ENCODE measurements at regions of chr2 and their contacts with region 1.

Region 1: DNA sequence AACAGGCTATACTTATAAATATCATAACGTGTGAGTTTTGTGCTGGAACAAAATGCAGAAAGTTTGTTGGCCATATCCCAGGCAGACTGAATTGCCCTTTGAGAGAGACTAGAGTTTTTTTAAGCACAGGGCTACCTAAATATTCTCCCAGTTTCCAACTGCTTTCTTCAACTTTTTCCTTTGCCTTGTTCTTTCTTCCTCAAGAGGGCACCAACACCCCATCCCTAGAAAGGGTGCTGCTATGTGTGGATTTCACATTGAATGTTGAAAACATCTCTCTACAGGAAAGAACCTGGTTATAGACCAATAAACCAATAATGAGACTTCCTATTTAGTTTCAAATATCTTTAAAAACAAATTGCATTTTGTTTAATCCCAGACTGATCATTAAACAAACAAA is 87.9 kb downstream of the ICOS start:
- DNase-seq: peak; percentile 50
- ATAC-seq: no peak
- H3K4me3 Mint-ChIP-seq: no peak overlapping the region
- H3K27ac Mint-ChIP-seq: no peak overlapping the region
- H3K4me1 Mint-ChIP-seq: peaks cover 52% of the 10 kb centered on the region
- H3K27me3 Mint-ChIP-seq: no peaks in the 10 kb centered on the region

Region 2: DNA sequence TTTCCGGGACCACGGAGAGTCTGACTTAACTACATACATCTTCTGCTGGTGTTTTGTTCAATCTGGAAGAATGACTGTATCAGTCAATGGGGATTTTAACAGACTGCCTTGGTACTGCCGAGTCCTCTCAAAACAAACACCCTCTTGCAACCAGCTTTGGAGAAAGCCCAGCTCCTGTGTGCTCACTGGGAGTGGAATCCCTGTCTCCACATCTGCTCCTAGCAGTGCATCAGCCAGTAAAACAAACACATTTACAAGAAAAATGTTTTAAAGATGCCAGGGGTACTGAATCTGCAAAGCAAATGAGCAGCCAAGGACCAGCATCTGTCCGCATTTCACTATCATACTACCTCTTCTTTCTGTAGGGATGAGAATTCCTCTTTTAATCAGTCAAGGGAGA is 64.8 kb before region 1 on chr2:
- CTCF ChIA-PET with region 1: interaction called, 14 read pairs
- POLR2A ChIA-PET with region 1: interaction called, 3 read pairs
- intact Hi-C with region 1: no loop called
- DNase-seq: no peak
- ATAC-seq: no peak
- H3K4me3 Mint-ChIP-seq: no peak overlapping the region
- H3K27ac Mint-ChIP-seq: no peak overlapping the region
- H3K4me1 Mint-ChIP-seq: peaks cover 47% of the 10 kb centered on the region
- H3K27me3 Mint-ChIP-seq: no peaks in the 10 kb centered on the region

Region 3: DNA sequence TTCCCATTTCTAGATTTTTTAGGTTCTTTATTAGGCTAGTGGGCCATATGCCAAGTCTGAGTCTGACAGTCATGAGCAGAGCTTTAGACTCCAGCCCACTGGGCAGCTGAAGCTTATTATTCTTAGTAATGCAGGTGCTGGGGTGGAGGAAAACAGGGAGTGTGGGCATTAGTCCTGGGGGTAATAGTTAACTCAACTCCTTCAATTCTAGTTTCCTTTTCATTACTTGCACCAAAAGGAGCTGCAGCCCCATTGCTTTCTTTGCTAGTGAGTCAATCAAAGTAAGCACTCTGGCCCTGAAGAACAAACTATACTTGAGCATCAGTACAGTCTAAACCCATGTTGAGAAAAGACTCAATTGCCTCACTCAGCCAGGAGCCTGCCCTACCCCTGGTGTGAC is 52.4 kb before region 1 on chr2:
- CTCF ChIA-PET with region 1: interaction called, 5 read pairs
- POLR2A ChIA-PET with region 1: no interaction called
- intact Hi-C with region 1: loop called (anchors 1 to 2 kb)
- DNase-seq: no peak
- ATAC-seq: no peak
- H3K4me3 Mint-ChIP-seq: no peak overlapping the region
- H3K27ac Mint-ChIP-seq: no peak overlapping the region
- H3K4me1 Mint-ChIP-seq: peaks cover 27% of the 10 kb centered on the region
- H3K27me3 Mint-ChIP-seq: no peaks in the 10 kb centered on the region

Region 4: GRCh38 chr2:203989521-203989920 is 35.0 kb before region 1 on chr2:
- CTCF ChIA-PET with region 1: interaction called, 3 read pairs
- POLR2A ChIA-PET with region 1: interaction called, 4 read pairs
- intact Hi-C with region 1: loop called in 1 of 2 experiments (anchors 2 kb)
- DNase-seq: no peak
- ATAC-seq: no peak
- H3K4me3 Mint-ChIP-seq: no peak overlapping the region
- H3K27ac Mint-ChIP-seq: peak overlapping the region; percentile 87
- H3K4me1 Mint-ChIP-seq: peaks cover 8% of the 10 kb centered on the region
- H3K27me3 Mint-ChIP-seq: no peaks in the 10 kb centered on the region

Region 5: GRCh38 chr2:203997980-203998809 is 26.3 kb before region 1 on chr2:
- CTCF ChIA-PET with region 1: interaction called, 4 read pairs
- POLR2A ChIA-PET with region 1: no interaction called
- intact Hi-C with region 1: loop called in 1 of 2 experiments (anchors 1 kb)
- DNase-seq: no peak
- ATAC-seq: peak; percentile 73
- H3K4me3 Mint-ChIP-seq: peak overlapping the region; percentile 32
- H3K27ac Mint-ChIP-seq: peak overlapping the region; percentile 86
- H3K4me1 Mint-ChIP-seq: peaks cover 67% of the 10 kb centered on the region
- H3K27me3 Mint-ChIP-seq: no peaks in the 10 kb centered on the region

Region 6: GRCh38 chr2:204010628-204011560 is 13.6 kb before region 1 on chr2:
- CTCF ChIA-PET with region 1: interaction called, 5 read pairs
- POLR2A ChIA-PET with region 1: interaction called, 4 read pairs
- intact Hi-C with region 1: loop called in 1 of 2 experiments (anchors 1 kb)
- DNase-seq: peak; percentile 31
- ATAC-seq: peak; percentile 42
- H3K4me3 Mint-ChIP-seq: peak overlapping the region; percentile 34
- H3K27ac Mint-ChIP-seq: peak overlapping the region; percentile 72
- H3K4me1 Mint-ChIP-seq: peaks cover 84% of the 10 kb centered on the region
- H3K27me3 Mint-ChIP-seq: no peaks in the 10 kb centered on the region

Region 7: DNA sequence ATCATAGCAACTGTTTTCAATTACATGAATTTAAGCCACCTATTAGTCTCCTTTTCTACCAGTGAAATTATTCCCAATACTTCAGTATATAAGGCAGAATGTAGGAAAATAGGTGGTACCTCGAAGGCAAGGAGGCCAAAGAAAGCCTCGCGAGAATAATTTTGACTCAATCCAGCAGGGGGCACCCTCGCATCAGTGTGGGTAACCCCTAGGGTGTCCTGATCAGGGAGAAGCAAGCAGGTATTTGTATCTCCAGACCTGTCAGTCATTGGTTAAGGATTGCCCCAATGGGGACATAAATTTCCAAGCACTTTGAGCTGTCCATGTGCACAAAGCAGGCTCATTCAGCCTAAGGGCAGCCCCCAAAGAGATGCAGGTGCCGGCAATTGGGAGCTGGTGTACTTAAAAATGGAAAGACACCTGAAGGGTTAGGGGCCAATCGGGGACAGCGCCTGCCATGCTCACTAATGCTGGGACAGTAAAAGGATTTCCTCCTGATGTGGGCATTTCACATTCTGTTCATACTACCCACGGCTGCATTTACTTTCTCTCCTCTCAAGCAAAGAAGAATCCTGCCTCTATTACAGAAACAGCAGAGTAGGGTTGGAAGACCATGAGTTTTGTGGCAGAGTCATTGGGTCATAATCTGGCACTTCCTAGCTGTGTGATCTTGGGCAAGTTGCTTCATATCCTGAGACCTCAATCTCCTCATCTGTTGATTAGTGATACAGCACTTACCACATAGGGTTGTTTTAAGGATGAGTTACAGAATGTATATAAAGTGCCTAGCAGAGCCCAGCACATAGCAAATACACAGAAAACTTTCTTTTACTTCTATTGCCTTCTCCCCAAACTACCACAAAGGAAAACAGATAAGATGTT is 48.2 kb after region 1 on chr2:
- CTCF ChIA-PET with region 1: interaction called, 4 read pairs
- POLR2A ChIA-PET with region 1: no interaction called
- intact Hi-C with region 1: loop called in 1 of 2 experiments (anchors 1 kb)
- DNase-seq: peak; percentile 88
- ATAC-seq: peak; percentile 89
- H3K4me3 Mint-ChIP-seq: no peak overlapping the region
- H3K27ac Mint-ChIP-seq: no peak overlapping the region
- H3K4me1 Mint-ChIP-seq: peaks cover 7% of the 10 kb centered on the region
- H3K27me3 Mint-ChIP-seq: peaks cover 5% of the 10 kb centered on the region

Region 8: DNA sequence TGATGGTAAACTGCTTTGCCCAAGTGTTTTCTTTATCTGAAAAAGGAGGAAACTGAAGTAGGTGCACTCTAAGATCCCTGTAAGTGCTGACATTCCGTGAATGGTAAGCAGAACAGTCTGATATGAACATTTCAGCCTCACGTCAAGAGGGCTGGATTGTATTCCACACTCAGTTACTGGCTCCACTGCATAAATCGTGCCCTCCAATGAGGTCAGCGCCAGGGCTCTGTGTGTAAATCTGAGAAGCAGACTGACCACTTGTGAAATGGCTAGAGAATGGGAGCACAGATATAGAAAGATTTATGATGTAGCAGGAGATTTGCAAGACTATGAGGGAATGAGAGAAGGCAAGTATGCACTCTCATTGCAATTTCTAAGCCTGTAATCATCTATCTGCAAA is 65.1 kb after region 1 on chr2:
- CTCF ChIA-PET with region 1: no interaction called
- POLR2A ChIA-PET with region 1: no interaction called
- intact Hi-C with region 1: no loop called
- DNase-seq: no peak
- ATAC-seq: no peak
- H3K4me3 Mint-ChIP-seq: no peak overlapping the region
- H3K27ac Mint-ChIP-seq: no peak overlapping the region
- H3K4me1 Mint-ChIP-seq: no peaks in the 10 kb centered on the region
- H3K27me3 Mint-ChIP-seq: peaks cover 3% of the 10 kb centered on the region

Region 9: DNA sequence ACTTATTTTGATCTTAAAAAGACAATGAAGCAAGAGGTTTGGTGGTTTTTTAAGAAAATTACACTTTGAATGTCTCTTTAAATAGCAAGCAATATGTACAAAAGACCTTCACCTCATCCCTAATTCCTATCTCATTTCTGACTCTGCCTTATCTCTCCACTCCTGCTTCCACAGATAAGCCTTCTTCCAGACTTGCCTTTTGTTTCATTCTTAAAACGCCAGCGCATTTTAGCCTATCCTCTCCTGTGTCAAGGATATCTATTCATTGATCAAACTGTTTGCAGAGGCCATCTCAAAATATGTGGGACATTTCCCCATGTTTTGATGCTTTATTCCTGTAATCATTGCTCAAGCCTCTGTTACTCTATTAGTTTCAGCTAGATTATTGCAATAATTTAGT is 1083.3 kb after region 1 on chr2:
- CTCF ChIA-PET with region 1: no interaction called
- POLR2A ChIA-PET with region 1: no interaction called
- intact Hi-C with region 1: no loop called
- DNase-seq: no peak
- ATAC-seq: no peak
- H3K4me3 Mint-ChIP-seq: no peak overlapping the region
- H3K27ac Mint-ChIP-seq: no peak overlapping the region
- H3K4me1 Mint-ChIP-seq: no peaks in the 10 kb centered on the region
- H3K27me3 Mint-ChIP-seq: no peaks in the 10 kb centered on the region